Esophagus muscularis mucosa (tissue), 4 donors: ENCODE measurements at regions of chr19 and their contacts with region 1.

Region 1: GRCh38 chr19:4014541-4015491 is 7.3 kb downstream of the PIAS4 start:
- DNase-seq: no peak
- H3K4me3 ChIP-seq: peak overlapping the region; percentile 20 to 41 (median 34)
- H3K27ac ChIP-seq: peak overlapping the region; percentile 72 to 84 (median 74)
- H3K4me1 ChIP-seq: peaks cover 62 to 92% (median 88%) of the 10 kb centered on the region in 4 donors
- H3K27me3 ChIP-seq: no peaks in the 10 kb centered on the region
- CTCF ChIP-seq: no peak
- EP300 ChIP-seq: no peak
- POLR2A ChIP-seq: no peak

Region 2: GRCh38 chr19:4058034-4058692 is 43.3 kb after region 1 on chr19:
- intact Hi-C with region 1: loop called (anchors 5 kb)
- DNase-seq: peak; percentile 97
- H3K4me3 ChIP-seq: peak overlapping the region; percentile 48 to 100 (median 94)
- H3K27ac ChIP-seq: peak overlapping the region; percentile 97 to 99 (median 98)
- H3K4me1 ChIP-seq: peaks cover 72 to 96% (median 87%) of the 10 kb centered on the region in 4 donors
- H3K27me3 ChIP-seq: no peaks in the 10 kb centered on the region
- CTCF ChIP-seq: peak in 2 of 3 experiments; percentile 5 to 20
- EP300 ChIP-seq: no peak
- POLR2A ChIP-seq: no peak